Activated CD4-positive, alpha-beta memory T cell treated with anti-CD3 and anti-CD28 coated beads, Interleukin-2, amount 10 ng/mL, durations not matched to agents 7 days and 5 days (primary cell): ENCODE measurements at regions of chr1 and their contacts with region 1.

Region 1: GRCh38 chr1:36385410-36386257 is at the start of gene STK40:
- DNase-seq: peak; percentile 99
- H3K4me3 Mint-ChIP-seq: peak within 1 kb of the TSS; percentile 87
- H3K27ac Mint-ChIP-seq: peak within 1 kb of the TSS; percentile 100
- H3K4me1 Mint-ChIP-seq: peaks cover 61% of the 10 kb centered on the region
- H3K27me3 Mint-ChIP-seq: no peaks in the 10 kb centered on the region
- total RNA-seq, gene STK40: 75.2 to 76.8 TPM

Region 2: DNA sequence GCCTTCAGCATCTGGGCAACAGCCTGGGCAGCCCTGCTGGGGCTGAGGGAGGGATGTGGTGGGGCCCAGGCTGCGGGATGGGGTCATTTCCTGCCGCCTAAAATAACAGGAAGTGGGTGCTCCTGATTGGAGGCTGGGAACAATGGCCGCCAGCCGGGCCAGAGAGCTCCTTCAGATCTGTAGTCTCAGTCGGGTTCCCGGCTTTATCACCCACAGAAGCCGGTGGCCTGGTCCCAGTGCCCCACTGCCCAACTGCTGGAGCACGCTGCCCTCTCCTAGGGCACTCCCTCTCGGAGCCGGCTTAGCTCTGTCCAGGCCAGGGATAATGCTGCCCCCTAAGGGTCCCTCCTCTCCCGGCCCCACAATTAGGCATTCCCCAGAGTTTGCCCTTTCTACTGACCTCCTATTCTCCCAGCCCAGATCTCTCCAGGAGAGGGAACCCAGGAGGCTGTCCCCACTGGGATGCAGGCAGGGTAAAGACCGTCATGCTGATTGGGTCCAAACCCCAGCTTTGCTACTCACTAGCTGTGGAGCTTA is 224.6 kb before region 1 on chr1:
- CTCF ChIA-PET with region 1: no interaction called
- POLR2A ChIA-PET with region 1: interaction called, 18 read pairs
- DNase-seq: peak; percentile 84
- H3K4me3 Mint-ChIP-seq: peak overlapping the region; percentile 74
- H3K27ac Mint-ChIP-seq: peak overlapping the region; percentile 88
- H3K4me1 Mint-ChIP-seq: peaks cover 67% of the 10 kb centered on the region
- H3K27me3 Mint-ChIP-seq: no peaks in the 10 kb centered on the region

Region 3: GRCh38 chr1:36397378-36398230 is 12.0 kb after region 1 on chr1 and contains the start of gene LSM10:
- CTCF ChIA-PET with region 1: interaction called, 19 read pairs
- POLR2A ChIA-PET with region 1: interaction called, 162 read pairs
- DNase-seq: peak; percentile 93
- H3K4me3 Mint-ChIP-seq: peak within 1 kb of the TSS; percentile 95
- H3K27ac Mint-ChIP-seq: peak within 1 kb of the TSS; percentile 95
- H3K4me1 Mint-ChIP-seq: peaks cover 50% of the 10 kb centered on the region
- H3K27me3 Mint-ChIP-seq: no peaks in the 10 kb centered on the region
- total RNA-seq, gene LSM10: 41.4 TPM

Region 4: DNA sequence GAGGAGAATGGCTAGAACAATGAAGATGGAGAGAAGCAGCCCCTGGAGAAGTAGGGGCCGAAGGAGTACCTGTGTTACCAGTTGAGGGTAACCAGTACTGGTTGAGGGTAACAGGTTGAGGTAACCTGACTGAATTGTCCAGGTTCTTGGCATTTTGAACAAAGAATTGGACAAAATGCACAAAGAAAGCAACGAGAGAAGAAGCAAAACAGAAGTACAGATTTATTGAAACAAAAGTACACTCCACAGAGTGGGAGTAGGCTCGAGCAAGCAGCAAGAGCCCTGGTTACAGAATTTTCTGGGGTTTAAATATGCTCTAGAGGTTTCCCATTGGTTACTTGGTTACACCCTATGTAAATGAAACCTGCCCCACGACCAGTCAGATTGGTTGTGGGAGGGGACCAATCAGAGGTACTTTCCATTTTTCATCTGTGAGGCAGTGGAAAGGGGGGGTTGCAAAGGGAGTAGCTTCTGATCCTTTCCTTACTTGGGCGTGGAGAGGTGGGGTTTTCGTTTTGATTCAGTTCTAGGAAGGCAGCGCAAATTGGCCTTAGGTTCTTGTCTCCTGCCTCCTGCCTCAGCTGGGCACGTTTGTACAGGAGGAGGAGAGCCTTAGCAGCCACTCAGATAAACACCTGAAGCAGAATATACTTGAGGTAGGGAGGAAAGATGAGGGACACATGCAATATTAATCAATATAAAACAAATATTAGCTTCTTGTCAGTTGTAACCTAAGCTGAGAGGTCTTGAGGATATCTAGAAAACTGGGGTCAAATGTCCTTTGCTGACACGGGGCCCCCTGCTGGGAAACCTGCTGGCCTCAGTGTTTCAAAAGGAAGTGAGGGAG is 26.3 kb after region 1 on chr1:
- CTCF ChIA-PET with region 1: interaction called, 9 read pairs
- POLR2A ChIA-PET with region 1: interaction called, 17 read pairs
- DNase-seq: peak; percentile 70
- H3K4me3 Mint-ChIP-seq: peak overlapping the region; percentile 10
- H3K27ac Mint-ChIP-seq: peak overlapping the region; percentile 95
- H3K4me1 Mint-ChIP-seq: peaks cover 30% of the 10 kb centered on the region
- H3K27me3 Mint-ChIP-seq: no peaks in the 10 kb centered on the region

Region 5: DNA sequence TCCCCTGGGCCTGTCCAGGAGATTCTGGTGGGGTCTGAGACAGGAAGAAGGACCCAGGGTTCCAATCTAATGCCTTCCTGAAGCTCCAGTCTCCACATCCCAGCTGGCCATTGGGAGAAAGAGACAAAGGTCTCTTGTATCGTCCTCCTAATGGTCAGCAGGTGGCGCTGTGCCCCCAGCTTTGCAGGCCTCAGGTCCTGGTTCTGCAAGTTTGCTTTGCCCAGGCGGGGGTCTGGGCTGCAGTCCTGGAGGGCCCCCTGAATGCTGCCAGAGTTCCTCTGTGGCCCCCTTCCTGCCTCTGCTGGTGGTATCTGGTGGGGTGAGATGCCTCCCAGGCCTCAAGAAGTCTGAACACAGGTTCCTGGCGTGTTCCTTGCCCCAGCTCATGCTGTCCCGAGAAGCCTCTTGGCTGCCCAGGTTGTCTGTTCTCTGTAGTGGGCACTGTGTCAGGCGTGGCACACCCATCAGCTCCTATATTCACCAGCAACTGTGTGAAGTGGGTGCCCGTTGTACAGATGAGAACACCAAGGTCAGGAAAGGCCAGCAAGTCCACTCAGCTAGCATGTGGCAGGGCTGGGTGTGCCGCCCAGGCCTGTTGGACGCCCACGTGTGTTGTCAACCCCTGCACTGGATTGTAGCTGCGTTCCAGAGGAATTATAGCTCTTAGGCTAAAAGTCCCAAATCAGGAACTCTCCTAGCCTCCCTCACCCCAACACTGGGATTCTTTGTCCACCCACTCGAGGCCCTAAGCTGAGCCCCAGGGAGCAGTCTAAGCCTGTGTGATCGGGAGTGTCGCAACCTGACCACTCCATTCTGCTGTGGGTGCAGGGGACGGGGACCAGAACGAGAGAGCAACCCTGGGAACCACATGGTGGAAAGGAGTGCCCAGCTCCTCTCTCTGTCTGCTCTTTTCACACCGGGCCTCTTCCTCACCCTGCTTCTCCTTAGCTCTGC is 131.0 kb after region 1 on chr1:
- CTCF ChIA-PET with region 1: no interaction called
- POLR2A ChIA-PET with region 1: no interaction called
- DNase-seq: peak; percentile 63
- H3K4me3 Mint-ChIP-seq: no peak overlapping the region
- H3K27ac Mint-ChIP-seq: no peak overlapping the region
- H3K4me1 Mint-ChIP-seq: peaks cover 18% of the 10 kb centered on the region
- H3K27me3 Mint-ChIP-seq: peaks cover 3% of the 10 kb centered on the region